ENCODE measurements at regions of chr6 and their contacts with region 1.

Region 1: GRCh38 chr6:116287689-116288282 is 8.1 kb upstream of the TSPYL1 start:
- DNase-seq: no peak
- H3K4me3 ChIP-seq: no peak overlapping the region
- H3K27ac ChIP-seq: no peak overlapping the region
- H3K27me3 ChIP-seq: no peaks in the 10 kb centered on the region
- CTCF ChIP-seq: peak; percentile 84

Region 2: DNA sequence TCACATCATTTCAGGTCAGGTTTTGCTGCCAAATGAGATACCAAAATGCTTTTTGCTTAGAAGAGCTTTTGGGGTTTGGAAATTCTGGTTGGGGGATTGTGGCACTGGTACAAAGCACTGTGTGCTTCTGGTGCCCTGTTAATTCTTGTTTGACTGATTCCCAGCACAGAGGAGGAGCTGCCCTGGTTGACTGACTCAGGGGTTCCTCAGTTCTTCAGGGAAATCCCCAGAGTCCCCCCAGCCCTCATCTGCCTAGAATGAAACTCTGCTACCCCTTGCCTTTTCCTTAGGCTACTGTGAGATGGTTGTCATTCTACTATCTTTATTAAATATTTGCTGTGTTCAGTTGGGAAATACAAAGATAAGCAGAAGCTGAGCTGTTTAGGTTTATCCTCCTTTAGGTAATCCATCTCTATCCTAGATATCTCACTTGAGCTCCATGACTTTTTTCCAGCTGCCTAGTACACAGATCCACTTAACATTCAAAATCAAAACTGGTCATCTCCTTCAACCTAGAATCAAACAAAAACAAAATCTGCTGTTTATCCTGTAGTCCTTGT is 16.8 kb after region 1 on chr6:
- CTCF ChIA-PET with region 1: interaction called, 16 read pairs
- POLR2A ChIA-PET with region 1: no interaction called
- DNase-seq: no peak
- H3K4me3 ChIP-seq: no peak overlapping the region
- H3K27ac ChIP-seq: no peak overlapping the region
- H3K27me3 ChIP-seq: no peaks in the 10 kb centered on the region
- CTCF ChIP-seq: no peak

Region 3: DNA sequence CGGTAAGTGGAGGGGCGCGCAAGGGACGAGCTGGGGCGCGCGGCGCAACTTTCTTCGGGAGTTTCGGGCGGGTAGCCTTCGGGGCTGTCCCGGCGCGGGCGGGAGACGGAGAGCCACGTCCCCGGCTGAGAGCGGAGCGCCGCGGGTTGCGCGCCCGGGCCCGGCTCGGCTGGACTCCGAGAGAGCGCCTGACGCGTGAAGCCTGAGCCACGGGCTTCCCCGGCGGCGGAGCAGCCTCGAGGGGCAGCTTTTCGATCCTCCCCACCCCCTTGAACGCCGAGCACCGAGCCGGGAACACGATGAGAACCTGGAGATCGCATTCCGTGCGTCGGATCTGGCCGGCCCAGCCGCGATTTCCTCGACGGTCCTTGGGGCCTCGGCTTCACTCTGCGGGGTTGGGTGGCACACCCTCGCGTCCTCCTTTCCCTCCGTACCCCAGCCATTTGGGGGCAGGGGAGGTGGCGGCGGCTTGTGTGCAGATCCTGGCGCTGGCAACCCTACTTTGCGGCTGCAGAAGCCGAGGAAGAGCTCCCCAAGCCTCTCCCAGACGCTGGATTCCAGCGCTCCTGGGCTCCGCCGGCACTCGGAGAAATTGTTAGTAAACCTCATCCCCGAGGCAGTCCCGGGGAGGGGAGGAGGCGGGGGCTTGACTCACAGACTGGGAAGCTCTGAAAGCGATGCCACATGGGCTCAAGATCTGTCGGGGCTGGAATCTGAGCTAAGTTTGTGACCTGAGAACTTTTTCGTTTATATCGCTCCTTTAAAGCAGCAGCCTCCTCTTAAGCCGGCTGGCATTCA is 83.5 kb after region 1 on chr6:
- CTCF ChIA-PET with region 1: interaction called, 15 read pairs
- POLR2A ChIA-PET with region 1: interaction called, 12 read pairs
- DNase-seq: peak; percentile 81
- H3K4me3 ChIP-seq: peak overlapping the region; percentile 88
- H3K27ac ChIP-seq: peak overlapping the region; percentile 98
- H3K27me3 ChIP-seq: no peaks in the 10 kb centered on the region
- CTCF ChIP-seq: no peak

Region 4: GRCh38 chr6:116419069-116419786 is 131.4 kb after region 1 on chr6:
- CTCF ChIA-PET with region 1: interaction called, 14 read pairs
- POLR2A ChIA-PET with region 1: no interaction called
- DNase-seq: no peak
- H3K4me3 ChIP-seq: no peak overlapping the region
- H3K27ac ChIP-seq: no peak overlapping the region
- H3K27me3 ChIP-seq: no peaks in the 10 kb centered on the region
- CTCF ChIP-seq: no peak

Region 5: DNA sequence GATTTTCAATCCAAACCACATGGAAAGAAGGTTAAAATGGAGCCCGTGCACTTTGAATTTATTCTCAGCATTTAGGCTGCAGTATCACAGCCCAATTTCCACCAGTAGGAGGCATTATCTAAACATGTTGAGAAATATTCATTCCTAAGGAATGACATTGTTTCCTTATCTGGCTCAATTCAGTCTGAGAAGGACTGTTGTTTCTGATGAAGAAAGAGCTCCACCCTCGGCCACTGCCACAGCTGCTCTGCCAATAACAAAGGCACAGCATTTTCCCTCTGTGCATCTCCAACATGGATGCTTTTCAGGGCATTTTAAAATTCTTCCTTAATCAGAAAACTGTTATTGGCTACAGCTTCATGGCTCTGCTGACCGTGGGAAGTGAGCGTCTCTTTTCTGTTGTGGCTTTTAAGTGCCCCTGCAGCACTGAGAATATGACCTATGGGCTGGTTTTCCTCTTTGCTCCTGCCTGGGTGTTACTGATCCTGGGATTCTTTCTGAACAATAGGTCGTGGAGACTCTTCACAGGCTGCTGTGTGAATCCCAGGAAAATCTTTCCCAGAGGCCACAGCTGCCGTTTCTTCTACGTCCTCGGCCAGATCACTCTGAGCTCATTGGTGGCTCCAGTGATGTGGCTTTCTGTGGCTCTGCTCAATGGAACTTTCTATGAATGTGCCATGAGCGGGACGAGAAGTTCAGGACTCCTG is 223.8 kb after region 1 on chr6 and contains the start of gene CALHM5:
- CTCF ChIA-PET with region 1: interaction called, 78 read pairs
- POLR2A ChIA-PET with region 1: no interaction called
- DNase-seq: peak; percentile 78
- H3K4me3 ChIP-seq: peak within 1 kb of the TSS; percentile 66
- H3K27ac ChIP-seq: peak within 1 kb of the TSS; percentile 94
- H3K27me3 ChIP-seq: no peaks in the 10 kb centered on the region
- CTCF ChIP-seq: peak; percentile 83
- polyA plus RNA-seq, gene CALHM5: 6.8 and 7.7 TPM in 2 replicates

Region 6: DNA sequence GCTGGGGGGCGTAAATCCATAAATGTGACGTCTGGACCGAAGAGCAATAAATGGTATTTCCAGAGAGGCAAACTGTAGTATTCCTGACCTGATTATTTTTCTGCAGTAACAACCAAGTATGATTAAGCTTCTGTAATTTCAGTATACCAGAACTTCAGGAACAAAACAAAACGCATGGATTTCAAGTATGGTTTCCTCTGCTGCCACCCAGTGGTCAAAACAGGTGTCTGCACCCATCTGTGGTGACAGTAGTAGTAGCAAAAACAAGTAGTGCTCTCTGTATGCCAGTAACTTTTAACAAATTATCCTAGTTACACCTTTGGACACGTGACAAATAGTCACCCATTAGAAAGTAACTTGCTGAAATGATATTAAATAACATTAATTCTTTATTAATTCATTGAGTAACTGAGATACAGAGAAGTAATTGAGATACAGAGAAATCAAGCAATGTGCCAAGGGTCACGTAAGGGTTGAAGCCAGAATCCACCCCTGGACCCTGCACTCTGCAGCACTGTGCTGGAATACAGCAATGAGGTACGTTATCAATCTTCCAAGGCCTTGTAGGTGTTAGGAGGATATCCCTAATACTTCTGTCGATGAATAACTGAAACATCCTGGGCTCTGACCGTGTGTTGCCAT is 273.7 kb after region 1 on chr6:
- CTCF ChIA-PET with region 1: interaction called, 102 read pairs
- POLR2A ChIA-PET with region 1: no interaction called
- DNase-seq: peak; percentile 51
- H3K4me3 ChIP-seq: no peak overlapping the region
- H3K27ac ChIP-seq: no peak overlapping the region
- H3K27me3 ChIP-seq: no peaks in the 10 kb centered on the region
- CTCF ChIP-seq: peak; percentile 91